HepG2 (cell line): ENCODE measurements at regions of chr15 and their contacts with region 1.

Region 1: DNA sequence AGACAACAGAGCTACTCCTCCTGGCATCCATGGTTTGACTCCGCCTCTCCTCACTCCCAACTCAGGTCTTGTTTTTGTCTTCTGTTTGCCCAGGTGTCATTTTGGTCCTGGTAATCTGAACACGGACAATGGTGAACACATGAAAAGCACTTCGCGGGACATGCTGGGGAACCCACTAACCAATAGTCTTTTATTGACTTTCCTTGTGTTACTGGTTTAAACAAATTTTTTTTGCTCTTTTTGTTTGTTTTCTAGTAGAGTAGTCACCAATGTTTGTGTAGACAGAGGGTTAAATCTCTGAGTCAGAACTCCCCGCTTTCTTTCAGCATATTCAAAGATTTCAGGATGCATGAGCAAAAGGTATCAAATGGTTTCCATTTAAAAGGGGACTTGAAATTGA is 38.3 kb downstream of the LARP6 start:
- DNase-seq: peak; percentile 57
- ATAC-seq: peak; percentile 43; the same call in 1 of the 3 replicates
- H3K4me3 ChIP-seq: no peak overlapping the region
- H3K27ac ChIP-seq: no peak overlapping the region
- H3K4me1 ChIP-seq: peaks cover 22% of the 10 kb centered on the region
- H3K27me3 ChIP-seq: peaks cover 2 to 3% of the 10 kb centered on the region in 2 experiments; a peak in 2 of 5 replicates
- CTCF ChIP-seq: no peak
- EP300 ChIP-seq: peak in 1 of 2 experiments; percentile 29; a peak in 1 of 4 replicates
- POLR2A ChIP-seq: no peak
- RAD21 ChIP-seq: no peak

Region 2: GRCh38 chr15:70722266-70723121 is 93.2 kb before region 1 on chr15:
- CTCF ChIA-PET with region 1: interaction called, 8 read pairs
- POLR2A ChIA-PET with region 1: no interaction called
- in situ Hi-C with region 1: no loop called
- intact Hi-C with region 1: loop called (anchors 10 kb)
- DNase-seq: peak; percentile 35
- ATAC-seq: no peak
- H3K4me3 ChIP-seq: no peak overlapping the region
- H3K27ac ChIP-seq: no peak overlapping the region
- H3K4me1 ChIP-seq: peaks cover 10% of the 10 kb centered on the region
- H3K27me3 ChIP-seq: no peaks in the 10 kb centered on the region
- CTCF ChIP-seq: peak; percentile 56
- EP300 ChIP-seq: no peak
- POLR2A ChIP-seq: no peak
- RAD21 ChIP-seq: no peak